G401 (cell line): ENCODE measurements at regions of chr3 and their contacts with region 1.

Region 1: DNA sequence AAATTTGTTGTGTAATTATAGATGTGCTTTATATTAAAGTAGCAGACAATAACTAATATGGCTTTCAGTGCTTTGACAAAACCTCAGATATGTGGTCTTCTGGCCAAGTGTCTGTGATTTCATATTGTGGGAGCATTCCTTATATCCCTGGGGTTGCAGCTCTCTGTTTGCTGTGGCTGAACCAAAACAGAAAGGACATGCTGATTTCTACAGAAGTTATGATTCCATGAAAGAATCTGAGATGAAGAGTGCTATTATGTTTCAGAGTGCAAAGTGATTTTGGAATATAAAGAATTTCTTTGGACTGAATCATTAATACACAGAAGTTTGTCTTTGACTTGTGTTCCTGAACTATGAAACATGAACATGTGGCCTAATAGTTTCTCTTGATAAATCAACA is 36.5 kb downstream of the CDV3 start:
- DNase-seq: no peak

Region 2: GRCh38 chr3:133649486-133650068 is 39.5 kb after region 1 on chr3:
- in situ Hi-C with region 1: loop called (anchors 5 kb)
- DNase-seq: no peak